ENCODE measurements at regions of chr6 and their contacts with region 1.

Region 1: DNA sequence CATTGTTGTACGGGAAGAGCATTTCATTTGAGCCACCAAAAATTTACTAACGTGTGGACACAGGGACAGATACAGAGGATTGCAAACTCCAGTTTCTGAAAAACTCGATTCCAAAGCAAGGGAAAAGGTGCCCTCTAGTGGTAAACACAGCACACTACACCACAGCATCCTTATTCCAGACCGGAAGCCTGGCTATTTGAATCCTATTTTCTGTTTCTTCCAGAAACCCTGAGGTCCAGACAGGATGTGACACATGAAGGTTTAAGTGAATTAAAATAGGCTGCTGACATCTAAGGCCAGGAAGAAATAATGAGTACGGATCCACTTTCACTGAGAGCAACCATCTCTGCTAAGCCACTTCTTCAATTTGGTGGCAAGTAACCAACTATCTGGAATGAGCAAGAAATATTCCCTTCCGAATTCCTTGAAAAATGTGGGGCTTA is 31.8 kb upstream of the GMPR start:
- DNase-seq: peak; percentile 25 to 72
- ATAC-seq: peak; percentile 84 to 97 (median 89)
- H3K4me3 ChIP-seq: no peak overlapping the region
- H3K4me3 Mint-ChIP-seq: no peak overlapping the region
- H3K27ac ChIP-seq: no peak overlapping the region
- H3K27ac Mint-ChIP-seq: no peak overlapping the region
- H3K4me1 ChIP-seq: no peaks in the 10 kb centered on the region
- H3K4me1 Mint-ChIP-seq: peaks cover 5% of the 10 kb centered on the region in 2 donors
- H3K27me3 ChIP-seq: no peaks in the 10 kb centered on the region
- H3K27me3 Mint-ChIP-seq: peaks cover 19 to 22% of the 10 kb centered on the region in 2 donors
- CTCF ChIP-seq: peak; percentile 99

Region 2: GRCh38 chr6:15522427-15522826 is 684.2 kb before region 1 on chr6:
- intact Hi-C with region 1: no loop called
- DNase-seq: no peak
- ATAC-seq: peak; percentile 72 to 83 (median 77)
- H3K4me3 ChIP-seq: no peak overlapping the region
- H3K4me3 Mint-ChIP-seq: peak overlapping the region; percentile 55
- H3K27ac ChIP-seq: peak overlapping the region; percentile 4
- H3K27ac Mint-ChIP-seq: peak overlapping the region; percentile 81 to 84
- H3K4me1 ChIP-seq: peaks cover 21% of the 10 kb centered on the region
- H3K4me1 Mint-ChIP-seq: peaks cover 61 to 71% of the 10 kb centered on the region in 2 donors
- H3K27me3 ChIP-seq: no peaks in the 10 kb centered on the region
- H3K27me3 Mint-ChIP-seq: no peaks in the 10 kb centered on the region
- CTCF ChIP-seq: no peak

Region 3: DNA sequence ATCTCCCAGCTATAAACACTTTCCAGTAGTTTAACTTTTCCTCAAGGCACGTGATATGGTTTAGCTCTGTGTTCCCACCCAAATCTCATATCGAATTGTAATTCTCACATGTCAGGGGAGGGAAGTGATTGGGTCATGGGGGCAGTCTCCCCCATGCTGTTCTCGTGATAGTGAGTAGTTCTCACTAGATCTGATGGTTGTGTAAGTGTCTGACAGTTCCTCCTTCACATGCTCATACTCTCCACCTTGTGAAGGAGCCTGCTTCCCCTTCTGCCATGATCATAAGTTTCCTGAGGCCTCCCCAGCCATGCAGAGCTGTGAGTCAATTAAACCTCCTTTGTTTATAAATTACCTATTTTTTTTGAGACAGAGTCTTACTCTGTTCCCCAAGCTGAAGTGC is 671.6 kb before region 1 on chr6:
- intact Hi-C with region 1: no loop called
- DNase-seq: no peak
- ATAC-seq: peak in 2 of 3 donors; percentile 36 to 41
- H3K4me3 ChIP-seq: no peak overlapping the region
- H3K4me3 Mint-ChIP-seq: no peak overlapping the region
- H3K27ac ChIP-seq: no peak overlapping the region
- H3K27ac Mint-ChIP-seq: peak overlapping the region in 1 of 2 donors; percentile 55
- H3K4me1 ChIP-seq: no peaks in the 10 kb centered on the region
- H3K4me1 Mint-ChIP-seq: peaks cover 36 to 47% of the 10 kb centered on the region in 2 donors
- H3K27me3 ChIP-seq: no peaks in the 10 kb centered on the region
- H3K27me3 Mint-ChIP-seq: no peaks in the 10 kb centered on the region
- CTCF ChIP-seq: no peak

Region 4: DNA sequence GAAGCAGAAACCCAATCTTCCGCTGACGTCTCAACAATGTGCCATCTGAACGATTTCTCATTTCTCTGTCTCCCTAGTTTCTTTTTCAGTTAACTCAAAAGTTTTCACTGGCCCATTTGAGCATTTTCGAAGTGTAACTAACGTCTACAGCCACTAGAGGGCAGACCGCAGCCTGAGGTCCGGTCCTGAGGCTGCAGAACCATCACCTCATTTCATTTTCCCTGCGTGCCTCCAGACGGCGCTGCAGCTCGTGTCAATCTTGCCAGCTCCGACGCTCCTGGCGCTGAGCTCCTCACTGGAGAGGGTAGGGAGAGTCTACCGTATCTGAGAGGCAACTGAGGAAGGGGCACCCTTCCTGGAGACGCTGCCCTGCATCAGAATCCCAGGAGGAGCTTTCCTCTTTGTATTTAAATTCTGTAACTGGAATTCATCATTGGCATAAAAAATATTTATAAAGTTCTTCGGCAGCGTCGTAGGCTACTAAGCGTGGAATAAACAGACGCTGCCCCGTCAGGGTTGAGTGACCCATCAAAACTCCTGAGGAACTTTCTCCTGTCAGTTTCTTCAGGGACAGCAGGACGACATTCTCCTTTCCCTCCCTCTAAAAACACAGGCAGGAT is 515.3 kb before region 1 on chr6:
- intact Hi-C with region 1: loop called (anchors 1 kb)
- DNase-seq: peak; percentile 73 to 94
- ATAC-seq: peak; percentile 99 to 100 (median 100)
- H3K4me3 ChIP-seq: no peak overlapping the region
- H3K4me3 Mint-ChIP-seq: peak overlapping the region; percentile 17
- H3K27ac ChIP-seq: no peak overlapping the region
- H3K27ac Mint-ChIP-seq: peak overlapping the region in 1 of 2 donors; percentile 57
- H3K4me1 ChIP-seq: peaks cover 3% of the 10 kb centered on the region
- H3K4me1 Mint-ChIP-seq: peaks cover 8 to 9% of the 10 kb centered on the region in 2 donors
- H3K27me3 ChIP-seq: no peaks in the 10 kb centered on the region
- H3K27me3 Mint-ChIP-seq: peaks cover 10 to 22% of the 10 kb centered on the region in 2 donors
- CTCF ChIP-seq: peak; percentile 100

Region 5: DNA sequence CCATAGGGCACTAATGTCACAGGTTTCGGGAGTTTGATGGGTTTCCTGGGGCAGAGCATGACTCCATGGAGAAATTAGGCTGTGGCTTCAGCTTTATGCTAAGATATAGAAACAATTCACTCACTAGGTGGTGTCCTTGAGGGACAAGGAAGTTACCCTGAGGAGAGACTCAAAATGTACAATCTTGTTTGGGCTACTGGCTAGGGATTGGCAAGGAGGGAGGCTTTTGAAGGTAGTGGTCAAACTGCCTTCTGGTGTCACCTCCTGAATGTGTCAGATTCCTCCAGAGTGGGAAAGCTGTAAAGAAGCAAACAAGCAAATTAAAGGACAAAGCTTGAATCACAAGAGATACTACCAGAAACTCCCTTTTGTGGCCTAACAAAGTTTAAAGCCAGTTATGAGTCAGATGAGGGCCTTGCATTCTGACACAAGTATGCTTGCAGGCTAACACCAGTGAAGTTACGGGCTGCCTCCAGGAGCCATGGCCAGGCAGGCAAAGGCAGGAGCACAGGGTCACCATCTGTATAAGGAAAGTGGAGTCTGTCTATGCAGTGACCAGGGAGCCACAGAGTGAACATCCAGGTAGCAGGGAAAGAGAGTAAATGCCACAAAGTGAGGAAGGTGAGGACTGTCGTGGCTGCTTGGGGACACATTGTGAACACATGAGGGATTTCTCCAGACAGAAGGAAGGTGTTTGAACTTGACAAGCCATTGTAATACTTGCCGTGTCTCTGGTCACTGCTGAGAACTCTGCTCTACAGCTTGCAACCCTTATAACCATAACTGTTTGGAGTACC is 436.1 kb before region 1 on chr6:
- intact Hi-C with region 1: loop called (anchors 1 kb)
- DNase-seq: no peak
- ATAC-seq: no peak
- H3K4me3 ChIP-seq: no peak overlapping the region
- H3K4me3 Mint-ChIP-seq: no peak overlapping the region
- H3K27ac ChIP-seq: no peak overlapping the region
- H3K27ac Mint-ChIP-seq: peak overlapping the region in 1 of 2 donors; percentile 51
- H3K4me1 ChIP-seq: no peaks in the 10 kb centered on the region
- H3K4me1 Mint-ChIP-seq: peaks cover 0 to 9% of the 10 kb centered on the region in 2 donors
- H3K27me3 ChIP-seq: no peaks in the 10 kb centered on the region
- H3K27me3 Mint-ChIP-seq: peaks cover 10 to 12% of the 10 kb centered on the region in 2 donors
- CTCF ChIP-seq: no peak

Measured in natural killer cell (primary cell).